Heart left ventricle (tissue), 16 donors: ENCODE measurements at regions of chr4 and their contacts with region 1.

Region 1: GRCh38 chr4:55038176-55038890 is 87.1 kb downstream of the KDR start:
- DNase-seq: peak in 4 of 5 donors; percentile 28 to 54 (median 45)
- ATAC-seq: peak; percentile 93 to 97 (median 94)
- H3K4me3 ChIP-seq: no peak overlapping the region
- H3K27ac ChIP-seq: peak overlapping the region; percentile 22 to 87 (median 70)
- H3K4me1 ChIP-seq: peaks cover 0 to 47% (median 18%) of the 10 kb centered on the region in 12 donors
- H3K27me3 ChIP-seq: no peaks in the 10 kb centered on the region
- CTCF ChIP-seq: no peak
- POLR2A ChIP-seq: peak in 1 of 2 donors; percentile 10

Region 2: GRCh38 chr4:55087009-55087929 is 48.9 kb after region 1 on chr4:
- intact Hi-C with region 1: loop called in 2 of 10 experiments (anchors 5 kb)
- DNase-seq: no peak
- ATAC-seq: no peak
- H3K4me3 ChIP-seq: no peak overlapping the region
- H3K27ac ChIP-seq: peak overlapping the region in 3 of 12 donors; percentile 9 to 12 (median 12)
- H3K4me1 ChIP-seq: peaks cover 0 to 63% (median 21%) of the 10 kb centered on the region in 12 donors
- H3K27me3 ChIP-seq: no peaks in the 10 kb centered on the region
- CTCF ChIP-seq: no peak
- POLR2A ChIP-seq: no peak

Region 3: GRCh38 chr4:55184600-55185523 is 146.5 kb after region 1 on chr4:
- intact Hi-C with region 1: no loop called
- DNase-seq: peak in 3 of 5 donors; percentile 27 to 47 (median 41)
- ATAC-seq: peak; percentile 53 to 72 (median 60)
- H3K4me3 ChIP-seq: no peak overlapping the region
- H3K27ac ChIP-seq: peak overlapping the region in 7 of 12 donors; percentile 7 to 29 (median 20)
- H3K4me1 ChIP-seq: peaks cover 0 to 37% (median 19%) of the 10 kb centered on the region in 12 donors
- H3K27me3 ChIP-seq: no peaks in the 10 kb centered on the region
- CTCF ChIP-seq: peak in 6 of 12 donors; percentile 10 to 39 (median 20)
- POLR2A ChIP-seq: no peak